ENCODE measurements at regions of chr9 and their contacts with region 1.

Region 1: GRCh38 chr9:131407717-131408195 is 13.9 kb downstream of the PRRC2B start:
- DNase-seq: peak; percentile 70
- H3K4me3 Mint-ChIP-seq: peak overlapping the region; percentile 63
- H3K27ac Mint-ChIP-seq: peak overlapping the region; percentile 89
- H3K4me1 Mint-ChIP-seq: peaks cover 92% of the 10 kb centered on the region
- H3K27me3 Mint-ChIP-seq: no peaks in the 10 kb centered on the region

Region 2: DNA sequence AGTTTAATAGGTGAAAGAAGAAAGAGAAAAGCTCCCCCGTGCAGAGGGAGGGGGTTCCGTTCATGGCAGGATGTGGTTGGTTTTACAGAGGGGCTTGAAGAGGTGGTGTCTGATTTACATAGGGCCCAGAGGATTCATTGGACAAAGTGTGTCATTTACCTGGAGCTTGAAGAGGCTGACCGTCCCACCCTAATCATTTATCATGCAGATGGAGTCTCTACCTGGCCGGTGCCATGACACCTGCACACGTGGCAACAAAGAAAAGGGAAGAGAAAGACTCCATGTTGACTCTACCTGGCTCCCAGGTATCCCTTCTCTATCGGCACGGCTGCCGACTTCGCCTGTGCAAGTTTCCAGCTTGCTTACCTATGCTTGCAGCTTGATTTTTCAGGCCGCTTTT is 49.2 kb before region 1 on chr9:
- CTCF ChIA-PET with region 1: no interaction called
- DNase-seq: no peak
- H3K4me3 Mint-ChIP-seq: no peak overlapping the region
- H3K27ac Mint-ChIP-seq: no peak overlapping the region
- H3K4me1 Mint-ChIP-seq: peaks cover 22% of the 10 kb centered on the region
- H3K27me3 Mint-ChIP-seq: peaks cover 10% of the 10 kb centered on the region

Region 3: GRCh38 chr9:131418143-131419028 is 10.6 kb after region 1 on chr9:
- CTCF ChIA-PET with region 1: interaction called, 10 read pairs
- DNase-seq: no peak
- H3K4me3 Mint-ChIP-seq: peak overlapping the region; percentile 22
- H3K27ac Mint-ChIP-seq: peak overlapping the region; percentile 73
- H3K4me1 Mint-ChIP-seq: peaks cover 91% of the 10 kb centered on the region
- H3K27me3 Mint-ChIP-seq: no peaks in the 10 kb centered on the region

Measured in activated naive CD4-positive, alpha-beta T cell treated with anti-CD3 and anti-CD28 coated beads, Interleukin-2, amount 10 ng/mL, durations not matched to agents 7 days and 5 days (primary cell).